ENCODE measurements at regions of chr4 and their contacts with region 1.

Region 1: GRCh38 chr4:75598390-75598789 is 31.9 kb downstream of the CDKL2 start:
- DNase-seq: no peak
- H3K4me3 Mint-ChIP-seq: peak overlapping the region; percentile 37
- H3K27ac Mint-ChIP-seq: peak overlapping the region; percentile 78
- H3K4me1 Mint-ChIP-seq: peaks cover 28% of the 10 kb centered on the region
- H3K27me3 Mint-ChIP-seq: no peaks in the 10 kb centered on the region

Region 2: GRCh38 chr4:75561790-75562189 is 36.6 kb before region 1 on chr4:
- CTCF ChIA-PET with region 1: no interaction called
- POLR2A ChIA-PET with region 1: no interaction called
- DNase-seq: no peak
- H3K4me3 Mint-ChIP-seq: no peak overlapping the region
- H3K27ac Mint-ChIP-seq: no peak overlapping the region
- H3K4me1 Mint-ChIP-seq: peaks cover 30% of the 10 kb centered on the region
- H3K27me3 Mint-ChIP-seq: peaks cover 24% of the 10 kb centered on the region

Region 3: DNA sequence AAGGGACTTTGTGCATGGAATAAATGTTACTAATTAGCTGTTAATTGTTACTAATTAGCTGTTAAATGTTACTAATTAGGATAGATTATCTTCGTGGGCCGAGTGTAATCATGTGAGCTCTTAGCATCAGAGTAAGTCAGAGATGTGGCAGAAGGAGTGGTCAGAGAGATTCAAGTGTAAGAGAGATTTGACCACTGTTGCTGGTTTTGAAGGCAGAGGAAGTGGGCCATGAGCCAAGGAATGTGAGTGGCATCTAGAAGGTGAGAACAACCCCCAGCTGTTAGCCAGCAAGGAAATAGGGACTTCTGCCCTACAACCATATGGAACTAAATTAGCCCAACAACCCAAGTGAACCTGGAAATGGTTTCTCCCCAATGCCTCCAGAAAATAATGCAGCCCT is 14.3 kb before region 1 on chr4:
- CTCF ChIA-PET with region 1: interaction called, 13 read pairs
- POLR2A ChIA-PET with region 1: interaction called, 3 read pairs
- DNase-seq: no peak
- H3K4me3 Mint-ChIP-seq: no peak overlapping the region
- H3K27ac Mint-ChIP-seq: no peak overlapping the region
- H3K4me1 Mint-ChIP-seq: no peaks in the 10 kb centered on the region
- H3K27me3 Mint-ChIP-seq: peaks cover 17% of the 10 kb centered on the region

Region 4: DNA sequence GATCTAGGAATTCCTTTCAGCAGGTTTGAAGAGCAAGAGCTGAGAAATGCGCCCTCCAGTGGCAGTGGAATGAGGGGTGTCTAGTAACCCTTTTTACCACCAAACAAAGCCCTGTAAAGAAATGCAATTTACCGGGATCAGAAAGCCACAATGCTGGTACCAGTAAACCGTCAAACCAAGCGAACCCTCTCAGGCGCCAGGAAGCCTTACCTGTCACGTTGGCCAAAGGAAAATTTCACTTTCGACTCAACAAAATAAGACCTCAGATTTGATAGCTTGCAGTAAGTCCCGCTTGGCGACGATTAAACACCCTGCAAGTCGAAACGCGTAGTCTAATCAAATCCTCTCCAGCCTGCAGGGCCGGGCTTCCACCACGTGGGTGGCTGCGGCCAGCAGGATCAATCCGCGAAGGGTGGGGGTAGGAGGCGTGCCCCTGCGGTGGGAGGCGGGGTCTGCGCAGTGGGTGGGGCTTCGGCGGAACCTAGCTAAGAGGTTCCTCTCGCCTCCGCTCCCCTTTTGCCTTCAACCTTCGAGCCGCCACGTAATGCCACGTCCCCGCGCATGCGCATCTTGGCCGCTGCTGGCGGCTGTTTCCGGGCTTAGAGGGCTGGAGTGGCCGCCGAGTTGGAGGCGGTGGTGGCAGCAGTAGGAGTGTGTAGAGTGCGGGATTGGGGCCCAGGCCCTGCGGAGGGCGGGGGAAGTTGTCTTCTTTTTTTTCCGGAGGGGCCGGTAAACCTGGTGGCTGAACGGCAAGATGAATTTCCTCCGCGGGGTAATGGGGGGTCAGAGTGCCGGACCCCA is 125.9 kb after region 1 on chr4 and contains the start of gene USO1:
- CTCF ChIA-PET with region 1: no interaction called
- POLR2A ChIA-PET with region 1: no interaction called
- DNase-seq: peak; percentile 100
- H3K4me3 Mint-ChIP-seq: peak within 1 kb of the TSS; percentile 100
- H3K27ac Mint-ChIP-seq: peak within 1 kb of the TSS; percentile 99
- H3K4me1 Mint-ChIP-seq: peaks cover 56% of the 10 kb centered on the region
- H3K27me3 Mint-ChIP-seq: no peaks in the 10 kb centered on the region
- total RNA-seq, gene USO1: 43.4 to 45.9 TPM